A673 (cell line): ENCODE measurements at regions of chr17 and their contacts with region 1.

Region 1: DNA sequence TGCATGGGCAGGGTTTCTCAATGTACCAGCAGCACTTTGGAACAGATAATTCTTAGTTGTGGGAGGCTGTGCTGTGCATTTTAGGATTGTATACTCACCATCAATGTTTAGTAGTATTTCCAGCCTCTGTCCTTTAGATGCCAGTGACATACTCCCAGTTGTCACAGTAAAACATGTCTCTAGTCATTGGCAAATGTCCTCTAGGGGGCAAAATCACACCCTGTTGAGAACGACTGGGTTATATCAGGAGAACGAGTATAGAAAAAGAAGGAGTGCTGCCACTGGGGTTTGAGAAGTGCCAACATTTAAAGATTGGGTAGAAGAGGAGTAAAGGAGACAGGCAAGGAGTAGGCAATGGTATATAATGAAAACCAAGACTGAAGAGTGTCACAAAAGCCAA is 37.9 kb upstream of the SMIM36 start:
- DNase-seq: peak; percentile 75
- H3K4me3 ChIP-seq: no peak overlapping the region
- H3K27ac ChIP-seq: no peak overlapping the region
- H3K4me1 ChIP-seq: no peaks in the 10 kb centered on the region
- H3K27me3 ChIP-seq: peaks cover 4% of the 10 kb centered on the region
- CTCF ChIP-seq: peak; percentile 77

Region 2: GRCh38 chr17:55601874-55602364 is 52.8 kb after region 1 on chr17:
- CTCF ChIA-PET with region 1: interaction called, 5 read pairs
- POLR2A ChIA-PET with region 1: no interaction called
- intact Hi-C with region 1: loop called (anchors 5 kb)
- DNase-seq: peak; percentile 68
- H3K4me3 ChIP-seq: no peak overlapping the region
- H3K27ac ChIP-seq: no peak overlapping the region
- H3K4me1 ChIP-seq: no peaks in the 10 kb centered on the region
- H3K27me3 ChIP-seq: peaks cover 37% of the 10 kb centered on the region
- CTCF ChIP-seq: peak; percentile 81

Region 3: DNA sequence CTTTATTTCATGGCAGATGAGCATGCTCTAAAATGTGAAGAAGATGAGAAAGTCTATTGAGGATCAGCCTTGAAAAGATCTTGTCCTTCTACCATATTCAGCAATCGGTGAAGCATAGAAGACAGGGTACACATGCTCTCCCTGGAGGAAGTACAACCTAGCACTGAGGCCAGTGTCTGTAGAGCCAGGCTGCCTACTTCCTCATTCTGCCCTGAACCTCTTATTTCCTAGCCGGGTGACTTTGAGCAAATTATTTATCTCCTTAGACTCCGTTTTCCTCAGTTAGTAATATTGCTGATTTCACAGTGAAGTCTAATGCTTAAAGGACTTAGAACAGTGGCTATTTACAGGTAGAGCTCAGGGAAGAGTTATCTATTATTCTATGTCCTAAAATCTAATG is 115.1 kb after region 1 on chr17:
- CTCF ChIA-PET with region 1: no interaction called
- POLR2A ChIA-PET with region 1: no interaction called
- intact Hi-C with region 1: no loop called
- DNase-seq: no peak
- H3K4me3 ChIP-seq: no peak overlapping the region
- H3K27ac ChIP-seq: no peak overlapping the region
- H3K4me1 ChIP-seq: peaks cover 47% of the 10 kb centered on the region
- H3K27me3 ChIP-seq: no peaks in the 10 kb centered on the region
- CTCF ChIP-seq: no peak

Region 4: DNA sequence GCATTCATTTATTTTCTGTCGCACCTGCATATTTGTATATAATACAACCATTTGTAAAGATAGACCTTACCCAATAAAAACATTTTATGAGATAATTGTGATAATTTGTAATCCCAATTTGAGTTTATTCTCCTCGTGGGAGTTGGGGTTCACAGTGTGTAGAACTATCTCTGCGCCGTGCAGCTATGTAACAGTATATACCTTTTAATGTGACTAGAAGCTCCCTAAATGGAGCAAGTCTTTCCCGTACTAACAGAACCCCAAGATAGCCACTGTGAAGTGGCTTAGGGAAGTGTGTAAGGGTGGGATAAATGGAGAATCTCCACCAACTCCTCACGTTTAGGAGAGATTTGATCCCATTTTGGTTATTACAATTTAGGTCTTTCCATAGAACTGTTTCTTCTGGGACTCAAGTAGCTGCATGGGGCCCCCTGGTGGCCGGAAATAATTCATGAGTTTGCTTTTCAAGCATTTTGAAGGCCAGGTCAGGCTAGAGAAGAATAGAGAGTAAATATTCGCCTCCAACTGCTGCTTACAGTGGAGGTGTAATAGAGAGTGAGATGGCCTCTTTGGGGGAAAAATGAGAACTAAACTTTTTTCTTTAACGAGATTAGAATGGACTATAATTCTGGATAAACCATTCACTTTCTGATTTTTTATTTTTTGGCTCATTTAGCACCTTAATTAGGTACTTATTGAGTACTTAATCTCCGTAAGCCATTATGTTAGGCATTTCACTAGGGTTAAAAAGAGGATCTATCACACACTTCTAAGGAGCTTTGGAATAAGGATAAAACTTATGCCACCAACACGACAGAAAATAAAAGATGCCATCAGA is 169.0 kb after region 1 on chr17:
- CTCF ChIA-PET with region 1: no interaction called
- POLR2A ChIA-PET with region 1: no interaction called
- intact Hi-C with region 1: loop called (anchors 1 kb)
- DNase-seq: peak; percentile 87
- H3K4me3 ChIP-seq: no peak overlapping the region
- H3K27ac ChIP-seq: no peak overlapping the region
- H3K4me1 ChIP-seq: peaks cover 25% of the 10 kb centered on the region
- H3K27me3 ChIP-seq: no peaks in the 10 kb centered on the region
- CTCF ChIP-seq: peak; percentile 89

Region 5: DNA sequence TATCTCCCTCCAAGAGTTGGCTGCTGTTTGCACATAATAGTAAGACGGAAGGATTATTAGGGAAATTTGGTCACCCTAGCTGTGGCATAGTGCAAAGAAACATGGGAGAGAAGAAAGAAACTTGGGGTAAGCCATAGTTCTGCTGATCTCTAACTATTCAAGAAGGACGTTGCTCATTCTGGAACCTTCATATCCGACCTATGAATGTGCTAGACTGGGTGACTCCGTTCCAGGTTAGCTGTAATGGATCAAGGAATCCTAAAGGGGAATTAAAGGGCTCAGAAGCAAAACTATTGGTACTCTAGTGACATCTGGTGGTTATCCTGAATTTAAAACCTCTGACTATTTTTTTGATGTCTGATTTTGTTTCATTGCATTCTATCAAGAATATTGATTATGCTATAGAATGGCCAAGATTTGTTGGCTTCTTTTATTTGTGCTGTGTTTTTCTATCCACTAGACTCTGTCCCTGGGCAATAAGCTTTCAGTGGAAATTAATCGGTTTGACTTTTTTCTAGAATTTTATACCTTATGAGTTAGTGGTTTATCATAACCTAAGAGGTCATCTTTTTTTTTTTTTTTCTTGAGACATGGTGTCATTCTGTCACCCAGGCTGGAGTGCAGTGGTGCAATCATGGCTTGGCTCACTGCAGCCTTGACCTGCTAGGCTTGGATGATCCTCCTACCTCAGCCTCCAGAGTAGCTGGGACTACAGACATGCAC is 221.2 kb after region 1 on chr17:
- CTCF ChIA-PET with region 1: no interaction called
- POLR2A ChIA-PET with region 1: interaction called, 12 read pairs
- intact Hi-C with region 1: loop called (anchors 1 kb)
- DNase-seq: peak; percentile 78
- H3K4me3 ChIP-seq: no peak overlapping the region
- H3K27ac ChIP-seq: no peak overlapping the region
- H3K4me1 ChIP-seq: peaks cover 16% of the 10 kb centered on the region
- H3K27me3 ChIP-seq: no peaks in the 10 kb centered on the region
- CTCF ChIP-seq: peak; percentile 70